B cell (primary cell): ENCODE measurements at regions of chr7 and their contacts with region 1.

Region 1: DNA sequence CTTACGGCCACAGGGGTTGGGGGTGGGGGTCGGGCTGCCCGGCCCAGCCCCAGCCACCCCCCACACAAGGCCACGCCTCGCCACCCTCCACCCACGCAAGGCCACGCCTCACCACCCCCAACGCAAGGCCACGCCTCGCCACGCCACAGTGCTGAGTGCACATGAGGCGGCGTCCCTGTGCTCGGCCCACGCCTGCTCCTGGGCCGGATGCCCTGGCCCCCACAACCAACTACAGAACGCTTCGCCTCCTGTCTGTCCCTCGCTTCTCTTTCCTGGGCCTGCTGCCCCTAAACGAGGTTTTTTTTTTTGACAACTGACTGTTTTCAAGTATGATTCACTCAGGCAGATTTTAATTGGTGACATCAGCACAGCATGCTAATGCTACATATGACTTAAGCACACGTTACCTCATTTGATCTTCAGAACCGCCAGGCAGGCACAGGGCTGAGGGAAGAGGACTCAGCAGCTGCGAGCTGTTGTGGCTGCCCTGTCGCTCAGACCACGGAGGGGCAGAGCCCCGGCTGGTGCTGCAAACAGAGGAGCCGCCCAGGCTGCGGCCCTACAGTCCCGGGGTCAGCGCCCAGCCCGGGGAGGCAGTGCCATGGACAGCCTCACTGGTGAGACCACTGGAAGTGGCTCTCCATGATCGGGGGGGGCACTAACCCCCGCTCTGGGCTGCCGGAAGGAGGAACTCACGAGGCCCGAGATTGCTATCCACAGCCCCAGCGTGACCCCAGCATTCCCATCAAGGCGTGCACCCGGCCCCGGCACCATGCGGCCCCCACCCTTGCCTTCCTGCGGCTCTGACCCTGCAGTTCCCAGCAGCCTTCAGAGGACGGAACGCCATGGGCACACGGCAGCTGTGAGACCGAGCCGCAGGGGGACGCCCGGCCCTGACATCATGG is 212.9 kb downstream of the MAD1L1 start:
- DNase-seq: peak; percentile 88
- ATAC-seq: peak; percentile 85
- H3K4me3 ChIP-seq: peak overlapping the region in 4 of 5 experiments; percentile 14 to 42 (median 38)
- H3K4me3 Mint-ChIP-seq: peak overlapping the region; percentile 85
- H3K27ac ChIP-seq: peak overlapping the region; percentile 81 to 93
- H3K27ac Mint-ChIP-seq: peak overlapping the region; percentile 93
- H3K4me1 ChIP-seq: peaks cover 35 to 36% of the 10 kb centered on the region in 2 donors
- H3K4me1 Mint-ChIP-seq: peaks cover 52% of the 10 kb centered on the region
- H3K27me3 ChIP-seq: no peaks in the 10 kb centered on the region
- H3K27me3 Mint-ChIP-seq: no peaks in the 10 kb centered on the region
- CTCF ChIP-seq: no peak

Region 2: GRCh38 chr7:1569833-1570633 is 449.8 kb before region 1 on chr7 and contains the start of gene PSMG3:
- CTCF ChIA-PET with region 1: no interaction called
- POLR2A ChIA-PET with region 1: no interaction called
- intact Hi-C with region 1: loop called (anchors 2 kb)
- DNase-seq: peak; percentile 92
- ATAC-seq: peak; percentile 91
- H3K4me3 ChIP-seq: peak within 1 kb of the TSS; percentile 18 to 87 (median 80)
- H3K4me3 Mint-ChIP-seq: peak within 1 kb of the TSS; percentile 90
- H3K27ac ChIP-seq: peak within 1 kb of the TSS; percentile 84 to 89
- H3K27ac Mint-ChIP-seq: peak within 1 kb of the TSS; percentile 91
- H3K4me1 ChIP-seq: peaks cover 12 to 24% of the 10 kb centered on the region in 2 donors
- H3K4me1 Mint-ChIP-seq: peaks cover 20% of the 10 kb centered on the region
- H3K27me3 ChIP-seq: no peaks in the 10 kb centered on the region
- H3K27me3 Mint-ChIP-seq: no peaks in the 10 kb centered on the region
- CTCF ChIP-seq: peak; percentile 30
- total RNA-seq, gene PSMG3: 27.4 and 28.6 TPM in 2 replicates

Region 3: GRCh38 chr7:1979591-1980560 is 40.0 kb before region 1 on chr7:
- CTCF ChIA-PET with region 1: no interaction called
- POLR2A ChIA-PET with region 1: no interaction called
- intact Hi-C with region 1: loop called (anchors 1 kb)
- DNase-seq: peak; percentile 88
- ATAC-seq: peak; percentile 95
- H3K4me3 ChIP-seq: peak overlapping the region in 4 of 5 experiments; percentile 25 to 64 (median 42)
- H3K4me3 Mint-ChIP-seq: peak overlapping the region; percentile 79
- H3K27ac ChIP-seq: peak overlapping the region; percentile 48 to 79
- H3K27ac Mint-ChIP-seq: peak overlapping the region; percentile 84
- H3K4me1 ChIP-seq: peaks cover 19 to 24% of the 10 kb centered on the region in 2 donors
- H3K4me1 Mint-ChIP-seq: peaks cover 19% of the 10 kb centered on the region
- H3K27me3 ChIP-seq: no peaks in the 10 kb centered on the region
- H3K27me3 Mint-ChIP-seq: no peaks in the 10 kb centered on the region
- CTCF ChIP-seq: no peak

Region 4: DNA sequence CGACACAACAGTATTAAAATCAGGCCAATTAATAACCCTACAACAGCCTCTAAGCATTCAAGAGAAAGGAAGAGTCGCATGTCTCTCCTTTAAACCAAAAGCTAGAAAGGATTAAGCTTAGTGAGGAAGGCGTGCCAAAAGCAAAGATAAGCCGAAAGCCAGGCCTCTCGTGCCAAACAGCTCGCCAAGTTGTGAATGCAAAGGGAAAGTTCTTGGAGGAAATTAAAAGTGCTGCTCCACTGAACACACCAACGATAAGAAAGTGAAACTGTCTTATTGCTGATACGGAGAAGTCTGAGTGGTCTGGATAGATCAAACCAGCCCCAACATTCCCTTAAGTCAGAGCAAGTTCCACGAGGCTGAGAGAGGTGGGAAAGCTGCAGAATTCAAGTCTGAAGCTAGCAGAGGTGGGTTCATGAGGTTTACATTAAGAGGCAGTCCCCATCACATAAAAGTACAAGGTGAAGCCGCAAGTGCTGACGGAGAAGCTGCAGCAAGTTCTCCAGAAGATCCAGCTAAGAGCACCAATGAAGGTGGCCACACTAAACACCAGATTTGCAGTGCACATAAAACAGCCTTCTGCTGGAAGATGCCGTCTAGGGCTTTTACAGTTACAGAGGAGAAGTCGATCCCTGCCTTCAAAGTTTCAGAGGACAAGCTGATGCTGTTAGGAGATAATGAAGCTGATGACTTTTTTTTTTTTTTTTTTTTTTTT is 18.1 kb after region 1 on chr7:
- CTCF ChIA-PET with region 1: interaction called, 4 read pairs
- POLR2A ChIA-PET with region 1: interaction called, 8 read pairs
- intact Hi-C with region 1: loop called (anchors 1 kb)
- DNase-seq: peak; percentile 79
- ATAC-seq: peak; percentile 65
- H3K4me3 ChIP-seq: peak overlapping the region; percentile 16 to 90 (median 57)
- H3K4me3 Mint-ChIP-seq: peak overlapping the region; percentile 93
- H3K27ac ChIP-seq: peak overlapping the region; percentile 74 to 84
- H3K27ac Mint-ChIP-seq: peak overlapping the region; percentile 88
- H3K4me1 ChIP-seq: peaks cover 54 to 60% of the 10 kb centered on the region in 2 donors
- H3K4me1 Mint-ChIP-seq: peaks cover 65% of the 10 kb centered on the region
- H3K27me3 ChIP-seq: no peaks in the 10 kb centered on the region
- H3K27me3 Mint-ChIP-seq: no peaks in the 10 kb centered on the region
- CTCF ChIP-seq: no peak

Region 5: DNA sequence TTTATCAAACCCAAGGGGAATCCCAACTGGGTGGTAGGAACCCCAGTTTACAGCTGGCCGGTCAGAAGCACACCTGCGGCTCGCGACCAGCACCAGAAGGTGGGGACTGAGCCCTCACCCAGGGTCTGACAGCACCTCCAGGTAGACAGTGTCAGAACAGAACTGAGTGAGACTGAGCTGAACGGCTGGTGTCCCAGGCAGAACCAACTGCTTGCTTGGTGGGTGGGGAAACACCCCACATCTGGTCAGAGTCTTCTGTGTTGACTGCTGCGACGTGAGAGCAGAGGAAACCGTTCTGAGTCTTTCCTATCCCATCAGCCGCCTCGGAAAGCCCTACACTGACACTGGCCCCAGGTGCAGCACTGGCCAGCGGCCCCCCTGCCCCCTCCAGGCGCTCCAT is 52.2 kb after region 1 on chr7:
- CTCF ChIA-PET with region 1: interaction called, 5 read pairs
- POLR2A ChIA-PET with region 1: no interaction called
- intact Hi-C with region 1: loop called (anchors 2 kb)
- DNase-seq: peak; percentile 79
- ATAC-seq: peak; percentile 90
- H3K4me3 ChIP-seq: no peak overlapping the region
- H3K4me3 Mint-ChIP-seq: peak overlapping the region; percentile 78
- H3K27ac ChIP-seq: peak overlapping the region in 1 of 2 donors; percentile 48
- H3K27ac Mint-ChIP-seq: peak overlapping the region; percentile 90
- H3K4me1 ChIP-seq: peaks cover 30 to 55% of the 10 kb centered on the region in 2 donors
- H3K4me1 Mint-ChIP-seq: peaks cover 45% of the 10 kb centered on the region
- H3K27me3 ChIP-seq: no peaks in the 10 kb centered on the region
- H3K27me3 Mint-ChIP-seq: no peaks in the 10 kb centered on the region
- CTCF ChIP-seq: no peak